Heart left ventricle (tissue), 16 donors: ENCODE measurements at regions of chr13 and their contacts with region 1.

Region 1: GRCh38 chr13:47774671-47774994 is 226.4 kb downstream of the SUCLA2 start:
- DNase-seq: no peak
- ATAC-seq: no peak
- H3K4me3 ChIP-seq: no peak overlapping the region
- H3K27ac ChIP-seq: no peak overlapping the region
- H3K4me1 ChIP-seq: no peaks in the 10 kb centered on the region
- H3K27me3 ChIP-seq: no peaks in the 10 kb centered on the region
- CTCF ChIP-seq: no peak
- POLR2A ChIP-seq: no peak

Region 2: DNA sequence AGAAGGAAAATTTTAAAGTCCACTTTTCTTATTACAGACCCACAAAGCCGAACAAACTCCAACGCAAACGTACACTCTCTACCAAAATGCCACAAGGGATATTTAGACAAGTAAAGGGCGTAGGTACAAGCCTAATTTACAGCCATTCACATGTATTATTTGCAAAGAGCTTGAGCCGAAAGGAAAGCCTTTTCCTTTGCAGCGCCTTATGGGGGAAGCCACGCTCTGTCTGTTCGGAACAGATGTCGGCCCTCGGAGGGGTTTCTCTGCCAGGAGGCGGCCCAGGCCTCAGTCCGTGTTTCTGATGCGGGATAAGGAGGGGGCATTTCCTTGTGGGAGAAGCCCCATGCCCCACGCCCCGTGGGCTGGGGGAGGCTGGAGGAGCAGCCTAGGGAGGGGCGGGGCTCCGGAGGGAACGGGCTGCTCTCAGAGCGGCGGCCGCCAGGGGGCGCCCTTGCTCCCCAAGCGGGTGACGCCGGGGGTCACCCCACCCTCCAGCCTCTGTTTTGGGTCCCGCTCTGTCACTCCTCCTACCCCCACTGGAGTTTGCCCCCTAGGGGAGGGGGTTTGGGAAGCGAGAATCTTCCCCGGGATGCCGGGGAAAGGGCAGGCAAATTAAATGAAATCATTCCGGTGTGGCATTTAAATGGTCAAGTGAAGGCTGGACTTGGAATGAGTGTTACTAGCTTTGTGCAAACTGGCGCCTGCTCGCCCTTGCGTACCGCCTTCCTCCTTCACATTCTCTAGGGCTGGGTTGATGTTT is 880.7 kb before region 1 on chr13:
- intact Hi-C with region 1: loop called in 3 of 10 experiments (anchors 10 kb)
- DNase-seq: peak; percentile 47 to 81 (median 57)
- ATAC-seq: peak; percentile 83 to 96 (median 93)
- H3K4me3 ChIP-seq: peak overlapping the region; percentile 13 to 68 (median 57)
- H3K27ac ChIP-seq: peak overlapping the region in 4 of 12 donors; percentile 0 to 47 (median 22)
- H3K4me1 ChIP-seq: peaks cover 0 to 23% (median 1%) of the 10 kb centered on the region in 12 donors
- H3K27me3 ChIP-seq: peaks cover 0 to 19% (median 4%) of the 10 kb centered on the region in 9 donors
- CTCF ChIP-seq: peak; percentile 88 to 99 (median 94)
- POLR2A ChIP-seq: no peak

Region 3: DNA sequence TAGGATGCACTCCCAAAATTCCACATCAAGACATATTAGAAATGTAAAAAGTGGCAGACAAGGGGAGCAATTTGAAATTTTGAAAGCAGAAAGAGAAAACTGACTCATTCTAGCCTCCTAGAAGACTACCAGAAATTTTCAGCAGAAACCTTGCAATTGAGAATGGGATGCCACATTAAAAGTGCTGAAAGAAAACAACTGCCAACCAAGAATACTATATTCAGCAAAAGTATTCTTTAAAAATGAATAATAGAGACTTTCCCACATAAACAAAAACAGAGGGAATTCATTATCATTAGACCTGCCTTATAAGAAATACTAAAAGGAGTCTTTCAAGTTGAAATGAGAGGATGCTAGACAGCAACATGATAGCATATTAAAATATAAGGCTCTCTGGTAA is 799.5 kb before region 1 on chr13:
- intact Hi-C with region 1: loop called in 6 of 10 experiments (anchors 5 to 10 kb)
- DNase-seq: no peak
- ATAC-seq: no peak
- H3K4me3 ChIP-seq: no peak overlapping the region
- H3K27ac ChIP-seq: no peak overlapping the region
- H3K4me1 ChIP-seq: no peaks in the 10 kb centered on the region
- H3K27me3 ChIP-seq: no peaks in the 10 kb centered on the region
- CTCF ChIP-seq: no peak
- POLR2A ChIP-seq: no peak

Region 4: GRCh38 chr13:47420568-47420967 is 354.1 kb before region 1 on chr13:
- intact Hi-C with region 1: loop called in 8 of 10 experiments (anchors 5 to 10 kb)
- DNase-seq: no peak
- ATAC-seq: peak in 3 of 4 donors; percentile 28 to 50 (median 34)
- H3K4me3 ChIP-seq: no peak overlapping the region
- H3K27ac ChIP-seq: no peak overlapping the region
- H3K4me1 ChIP-seq: peaks cover 0 to 8% (median 0%) of the 10 kb centered on the region in 12 donors
- H3K27me3 ChIP-seq: no peaks in the 10 kb centered on the region
- CTCF ChIP-seq: no peak
- POLR2A ChIP-seq: no peak